GM12878 (cell line): ENCODE measurements at regions of chr10 and their contacts with region 1.

Region 1: DNA sequence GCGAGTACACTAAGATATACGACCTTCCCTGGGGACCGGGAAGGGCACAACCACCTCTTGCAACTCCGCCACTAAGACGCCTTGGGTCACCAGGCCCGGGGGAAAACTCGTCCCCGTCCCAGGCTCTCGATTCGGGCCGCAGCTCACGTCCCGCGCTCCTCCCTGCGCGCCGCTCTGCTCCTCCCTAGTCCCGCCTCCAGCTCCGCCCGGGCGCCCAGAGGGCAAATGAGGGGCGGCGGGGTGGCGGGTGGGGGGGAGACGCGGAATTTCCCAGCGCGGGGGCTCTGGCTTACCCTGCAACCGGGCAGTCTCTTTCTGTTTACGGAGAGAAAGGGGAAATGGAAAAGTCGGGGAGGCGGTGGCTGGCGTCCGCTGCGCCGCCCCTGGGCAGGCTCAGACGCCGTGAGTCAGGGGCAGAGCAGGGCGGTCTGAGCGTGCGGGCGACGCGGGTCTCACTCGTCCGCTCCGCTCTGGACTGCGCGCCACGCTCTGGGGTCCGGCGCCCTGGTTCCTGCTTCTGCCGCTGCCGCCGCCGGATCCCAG is at the start of gene MAP3K8:
- DNase-seq: peak; percentile 84
- ATAC-seq: peak; percentile 72
- H3K4me3 ChIP-seq: peak within 1 kb of the TSS; percentile 100
- H3K27ac ChIP-seq: peak within 1 kb of the TSS; percentile 91
- H3K4me1 ChIP-seq: peaks cover 25% of the 10 kb centered on the region
- H3K27me3 ChIP-seq: no peaks in the 10 kb centered on the region
- CTCF ChIP-seq: no peak
- EP300 ChIP-seq: no peak; a peak in 1 of 4 replicates
- POLR2A ChIP-seq: peak; percentile 82
- RAD21 ChIP-seq: 0 out of 2 replicates have a peak, but pooled peaks have one; percentile 11
- polyA plus RNA-seq, gene MAP3K8: 45.5 to 47.9 TPM

Region 2: DNA sequence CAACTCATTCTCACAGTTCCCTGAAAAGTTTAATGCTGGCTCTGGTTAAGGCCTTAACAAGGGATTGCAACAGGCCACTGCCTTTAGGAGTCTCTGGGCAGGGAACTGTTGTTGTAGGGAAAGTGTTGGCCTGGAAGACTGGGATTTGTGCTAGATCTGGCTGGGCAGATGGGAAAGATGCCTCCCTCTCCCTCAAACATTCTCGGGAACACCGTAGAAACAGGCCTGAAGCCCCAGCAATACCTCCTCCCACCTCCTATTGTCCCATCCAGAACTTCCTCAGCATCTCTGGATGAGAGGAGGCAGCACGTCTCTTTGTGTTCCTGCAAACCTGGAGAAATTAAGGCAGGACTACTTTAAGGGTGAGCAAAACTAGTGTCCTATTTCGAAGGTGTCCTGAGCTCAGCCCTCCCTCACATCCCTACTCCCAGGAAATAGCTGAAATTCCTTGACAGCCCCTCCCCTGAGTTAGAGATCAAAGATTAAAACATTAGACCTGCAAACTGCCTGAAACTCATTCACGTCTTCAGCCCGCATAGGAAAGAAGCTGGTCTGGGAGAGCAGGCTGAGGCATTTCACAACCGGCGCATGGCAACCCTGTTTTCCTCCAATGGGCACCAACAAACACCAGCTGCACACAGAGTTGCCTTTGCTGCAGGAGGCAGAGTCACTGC is 10.7 kb before region 1 on chr10:
- CTCF ChIA-PET with region 1: interaction called, 13 read pairs
- POLR2A ChIA-PET with region 1: interaction called, 132 read pairs
- RAD21 ChIA-PET with region 1: interaction called, 255 read pairs
- SMC1A ChIA-PET with region 1: interaction called, 262 read pairs
- in situ Hi-C with region 1: no loop called
- intact Hi-C with region 1: loop called (anchors 1 kb)
- DNase-seq: no peak
- ATAC-seq: no peak
- H3K4me3 ChIP-seq: no peak overlapping the region; the same call in 1 of the 2 replicates
- H3K27ac ChIP-seq: no peak overlapping the region; the same call in none of the 2 replicates
- H3K4me1 ChIP-seq: peaks cover 61% of the 10 kb centered on the region
- H3K27me3 ChIP-seq: no peaks in the 10 kb centered on the region
- CTCF ChIP-seq: no peak
- EP300 ChIP-seq: no peak
- POLR2A ChIP-seq: no peak
- RAD21 ChIP-seq: no peak

Region 3: GRCh38 chr10:30456266-30456665 is 22.5 kb after region 1 on chr10:
- CTCF ChIA-PET with region 1: interaction called, 10 read pairs
- POLR2A ChIA-PET with region 1: interaction called, 11 read pairs
- RAD21 ChIA-PET with region 1: interaction called, 14 read pairs
- SMC1A ChIA-PET with region 1: interaction called, 32 read pairs
- in situ Hi-C with region 1: no loop called
- intact Hi-C with region 1: no loop called
- DNase-seq: peak; percentile 65
- ATAC-seq: peak; percentile 88
- H3K4me3 ChIP-seq: no peak overlapping the region
- H3K27ac ChIP-seq: peak overlapping the region; percentile 64
- H3K4me1 ChIP-seq: peaks cover 15% of the 10 kb centered on the region
- H3K27me3 ChIP-seq: no peaks in the 10 kb centered on the region
- CTCF ChIP-seq: no peak
- EP300 ChIP-seq: no peak
- POLR2A ChIP-seq: no peak
- RAD21 ChIP-seq: no peak; the same call in 1 of the 2 replicates

Region 4: DNA sequence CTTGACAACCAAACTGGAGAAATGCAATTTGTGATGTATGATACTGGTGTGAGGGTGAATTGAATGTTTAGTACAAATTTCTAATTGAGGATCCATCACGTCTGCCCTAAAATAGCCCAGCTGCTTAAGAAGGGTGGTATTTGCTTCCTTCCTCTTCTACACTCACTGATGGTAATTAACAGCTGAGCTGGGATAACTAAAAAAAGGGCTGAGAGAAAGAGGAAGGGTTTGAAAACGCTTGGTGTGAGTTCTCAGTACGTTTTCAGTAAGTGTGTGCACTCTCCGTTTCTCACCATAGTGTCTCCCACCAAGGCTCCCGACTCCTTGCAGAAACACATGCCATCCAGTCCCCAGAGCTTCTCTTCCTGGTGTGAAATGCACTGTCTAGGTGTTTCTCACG is 54.5 kb after region 1 on chr10:
- CTCF ChIA-PET with region 1: interaction called, 8 read pairs
- POLR2A ChIA-PET with region 1: interaction called, 10 read pairs
- RAD21 ChIA-PET with region 1: interaction called, 19 read pairs
- SMC1A ChIA-PET with region 1: interaction called, 51 read pairs
- in situ Hi-C with region 1: no loop called
- intact Hi-C with region 1: loop called (anchors 5 kb)
- DNase-seq: no peak
- ATAC-seq: peak; percentile 54
- H3K4me3 ChIP-seq: no peak overlapping the region
- H3K27ac ChIP-seq: peak overlapping the region; percentile 55
- H3K4me1 ChIP-seq: peaks cover 55% of the 10 kb centered on the region
- H3K27me3 ChIP-seq: no peaks in the 10 kb centered on the region
- CTCF ChIP-seq: no peak
- EP300 ChIP-seq: no peak
- POLR2A ChIP-seq: no peak
- RAD21 ChIP-seq: no peak

Region 5: GRCh38 chr10:30502266-30503060 is 68.7 kb after region 1 on chr10:
- CTCF ChIA-PET with region 1: interaction called, 8 read pairs
- POLR2A ChIA-PET with region 1: interaction called, 22 read pairs
- RAD21 ChIA-PET with region 1: interaction called, 22 read pairs
- SMC1A ChIA-PET with region 1: interaction called, 19 read pairs
- in situ Hi-C with region 1: no loop called
- intact Hi-C with region 1: no loop called
- DNase-seq: no peak
- ATAC-seq: peak; percentile 81
- H3K4me3 ChIP-seq: peak overlapping the region; percentile 29; the same call in 1 of the 2 replicates
- H3K27ac ChIP-seq: peak overlapping the region; percentile 81
- H3K4me1 ChIP-seq: peaks cover 45% of the 10 kb centered on the region
- H3K27me3 ChIP-seq: no peaks in the 10 kb centered on the region
- CTCF ChIP-seq: no peak
- EP300 ChIP-seq: peak; percentile 56 to 60; a peak in 2 of 4 replicates
- POLR2A ChIP-seq: no peak
- RAD21 ChIP-seq: no peak

Region 6: GRCh38 chr10:30529373-30529998 is 95.7 kb after region 1 on chr10:
- CTCF ChIA-PET with region 1: interaction called, 123 read pairs
- POLR2A ChIA-PET with region 1: interaction called, 113 read pairs
- RAD21 ChIA-PET with region 1: interaction called, 48 read pairs
- SMC1A ChIA-PET with region 1: interaction called, 284 read pairs
- in situ Hi-C with region 1: no loop called
- intact Hi-C with region 1: loop called (anchors 1 kb)
- DNase-seq: peak; percentile 77
- ATAC-seq: peak; percentile 87
- H3K4me3 ChIP-seq: peak overlapping the region; percentile 48
- H3K27ac ChIP-seq: peak overlapping the region; percentile 97
- H3K4me1 ChIP-seq: peaks cover 33% of the 10 kb centered on the region
- H3K27me3 ChIP-seq: no peaks in the 10 kb centered on the region
- CTCF ChIP-seq: no peak
- EP300 ChIP-seq: peak; percentile 97 to 99; a peak in 3 of 4 replicates
- POLR2A ChIP-seq: peak; percentile 88
- RAD21 ChIP-seq: 0 out of 2 replicates have a peak, but pooled peaks have one; percentile 11

Region 7: GRCh38 chr10:30583778-30584415 is 150.1 kb after region 1 on chr10:
- CTCF ChIA-PET with region 1: interaction called, 15 read pairs
- POLR2A ChIA-PET with region 1: no interaction called
- RAD21 ChIA-PET with region 1: interaction called, 4 read pairs
- SMC1A ChIA-PET with region 1: interaction called, 3 read pairs
- in situ Hi-C with region 1: no loop called
- intact Hi-C with region 1: no loop called
- DNase-seq: peak; percentile 61
- ATAC-seq: peak; percentile 75
- H3K4me3 ChIP-seq: peak overlapping the region; percentile 54
- H3K27ac ChIP-seq: peak overlapping the region; percentile 39
- H3K4me1 ChIP-seq: peaks cover 22% of the 10 kb centered on the region
- H3K27me3 ChIP-seq: no peaks in the 10 kb centered on the region
- CTCF ChIP-seq: no peak
- EP300 ChIP-seq: no peak
- POLR2A ChIP-seq: no peak
- RAD21 ChIP-seq: no peak